RWPE1 (cell line): ENCODE measurements at regions of chr11 and their contacts with region 1.

Region 1: GRCh38 chr11:65180877-65181568 is 705 bp upstream of the CAPN1 start:
- DNase-seq: peak; percentile 65
- H3K27ac ChIP-seq: peak overlapping the region; percentile 94
- CTCF ChIP-seq: peak; percentile 75

Region 2: DNA sequence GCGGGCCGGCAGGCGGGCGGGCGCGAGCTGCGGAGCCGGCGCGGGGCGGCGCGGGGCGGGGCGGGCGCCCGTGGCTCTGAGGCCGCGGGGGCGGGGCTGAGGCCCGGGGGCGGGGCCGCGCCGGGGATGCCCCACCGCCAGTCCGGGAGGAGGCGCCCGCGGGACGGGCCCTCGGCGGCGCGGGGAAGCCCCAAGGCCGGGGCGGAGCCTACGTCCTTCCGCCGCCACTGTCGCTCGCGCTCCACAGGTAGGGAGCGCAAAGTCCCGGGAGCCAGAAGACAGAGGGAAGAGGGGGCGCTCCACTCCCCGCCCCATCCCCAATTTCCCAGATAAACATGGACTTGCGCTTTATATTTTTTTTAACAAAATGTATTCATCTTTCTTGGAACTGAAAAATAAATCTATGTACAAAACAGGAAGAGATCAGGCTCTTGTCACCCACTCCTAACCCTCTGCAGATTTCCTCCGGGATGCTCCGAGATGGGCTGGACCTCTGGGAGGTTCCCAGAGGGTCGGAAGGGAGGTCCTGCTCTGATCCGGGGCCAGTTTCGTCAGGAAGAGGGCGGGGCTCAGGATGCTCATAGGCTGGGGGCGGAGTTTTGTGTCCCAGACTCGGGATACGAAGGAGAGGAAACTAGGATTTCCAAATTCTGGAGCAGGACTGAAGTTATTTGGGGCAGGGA is 377.7 kb before region 1 on chr11 and contains the start of gene MAP4K2:
- CTCF ChIA-PET with region 1: no interaction called
- POLR2A ChIA-PET with region 1: no interaction called
- DNase-seq: peak; percentile 93
- H3K27ac ChIP-seq: peak within 1 kb of the TSS; percentile 89
- CTCF ChIP-seq: peak; percentile 62

Region 3: GRCh38 chr11:65134386-65135253 is 46.4 kb before region 1 on chr11 and contains the start of gene SYVN1:
- CTCF ChIA-PET with region 1: interaction called, 5 read pairs
- POLR2A ChIA-PET with region 1: interaction called, 11 read pairs
- DNase-seq: peak; percentile 99
- H3K27ac ChIP-seq: peak within 1 kb of the TSS; percentile 96
- CTCF ChIP-seq: no peak

Region 4: GRCh38 chr11:65236194-65237059 is 55.4 kb after region 1 on chr11:
- CTCF ChIA-PET with region 1: no interaction called
- POLR2A ChIA-PET with region 1: no interaction called
- DNase-seq: no peak
- H3K27ac ChIP-seq: no peak overlapping the region
- CTCF ChIP-seq: no peak

Region 5: DNA sequence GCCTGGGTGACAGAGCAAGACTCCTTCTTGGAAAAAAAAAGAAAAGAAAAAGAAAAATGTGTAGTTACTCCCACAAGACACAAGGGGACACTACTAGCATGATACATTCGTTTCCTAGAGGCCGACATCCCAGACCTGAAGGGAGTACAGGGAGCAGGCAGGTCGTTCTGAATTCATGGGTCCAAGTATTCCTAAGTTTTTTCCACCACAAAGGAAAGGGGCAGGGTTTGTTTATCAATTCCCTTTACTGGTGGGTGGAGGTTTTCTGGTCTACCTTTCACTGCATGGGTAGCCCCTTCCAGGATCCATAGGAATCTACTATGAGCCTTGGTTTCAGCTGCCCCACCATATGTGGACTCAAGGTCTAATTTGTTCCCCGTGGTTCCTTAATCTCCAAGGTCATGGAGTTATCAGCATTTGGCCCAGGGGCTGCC is 185.3 kb after region 1 on chr11:
- CTCF ChIA-PET with region 1: no interaction called
- POLR2A ChIA-PET with region 1: no interaction called
- DNase-seq: peak; percentile 80
- H3K27ac ChIP-seq: peak overlapping the region; percentile 42; the same call in 1 of the 2 replicates
- CTCF ChIP-seq: peak; percentile 87